Activated naive CD4-positive, alpha-beta T cell treated with anti-CD3 and anti-CD28 coated beads for 36 hours (primary cell): ENCODE measurements at regions of chr11 and their contacts with region 1.

Region 1: DNA sequence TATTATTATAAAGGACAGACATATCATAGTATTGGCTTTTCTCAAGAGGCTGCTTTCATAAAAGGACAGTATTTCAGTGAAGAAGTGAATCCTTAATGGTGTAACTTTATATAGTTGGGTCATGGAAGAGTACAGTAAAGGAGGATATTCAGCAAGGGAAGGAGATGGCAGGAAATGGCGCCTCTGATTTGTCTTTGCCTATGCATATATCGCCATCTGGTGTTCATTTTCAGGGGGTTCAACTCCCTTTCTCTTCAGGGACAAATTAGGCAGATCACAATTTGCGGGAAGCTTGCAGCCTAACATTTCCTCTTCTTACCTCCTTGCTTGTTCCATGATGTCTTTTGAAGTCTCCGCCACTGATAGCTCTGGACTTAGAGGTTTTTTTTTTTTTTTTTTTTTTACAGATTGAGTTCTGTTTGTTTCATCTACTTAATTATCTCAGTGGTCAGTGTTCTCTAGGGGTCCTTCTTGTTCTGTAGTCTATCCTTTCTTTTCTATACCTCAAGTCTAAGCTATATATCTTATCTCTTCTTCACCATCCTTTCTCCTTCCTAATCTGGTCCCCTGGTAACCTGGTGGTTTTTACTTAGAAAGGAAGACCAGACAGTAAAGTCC is 21.8 kb upstream of the RRM1 start:
- DNase-seq: peak; percentile 67
- H3K4me3 Mint-ChIP-seq: no peak overlapping the region
- H3K27ac Mint-ChIP-seq: peak overlapping the region; percentile 63
- H3K4me1 Mint-ChIP-seq: peaks cover 47% of the 10 kb centered on the region
- H3K27me3 Mint-ChIP-seq: no peaks in the 10 kb centered on the region

Region 2: GRCh38 chr11:3824714-3825472 is 247.9 kb before region 1 on chr11:
- CTCF ChIA-PET with region 1: interaction called, 19 read pairs
- intact Hi-C with region 1: loop called (anchors 1 kb)
- DNase-seq: peak; percentile 90
- H3K4me3 Mint-ChIP-seq: no peak overlapping the region
- H3K27ac Mint-ChIP-seq: peak overlapping the region; percentile 76
- H3K4me1 Mint-ChIP-seq: peaks cover 21% of the 10 kb centered on the region
- H3K27me3 Mint-ChIP-seq: no peaks in the 10 kb centered on the region

Region 3: DNA sequence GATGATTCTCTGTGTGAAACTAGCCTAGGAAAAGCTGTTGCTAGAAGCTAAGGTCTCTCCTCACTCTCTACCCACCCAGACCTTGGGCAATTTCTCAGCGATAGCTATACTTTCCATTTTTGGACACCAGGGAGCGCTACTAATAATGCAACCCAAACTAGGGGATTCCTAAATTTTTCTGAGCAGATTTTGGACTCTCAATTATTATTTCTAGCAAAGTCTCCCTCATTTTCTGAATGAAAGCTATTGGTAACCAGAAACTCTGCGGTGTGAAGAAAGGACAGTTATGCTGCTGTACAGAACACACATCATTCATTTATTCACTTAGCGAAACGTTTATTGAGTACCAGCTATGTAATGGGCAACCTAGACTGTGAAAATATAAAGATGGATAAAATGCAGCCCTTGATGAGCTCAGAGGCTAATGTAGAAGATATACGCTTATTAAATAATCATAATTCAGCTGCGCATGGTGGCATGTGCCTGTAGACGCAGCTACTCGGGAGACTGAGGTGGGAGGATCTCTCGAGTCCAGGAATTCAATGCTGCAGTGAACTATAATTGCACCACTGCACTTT is 223.4 kb before region 1 on chr11:
- CTCF ChIA-PET with region 1: interaction called, 573 read pairs
- intact Hi-C with region 1: loop called (anchors 1 kb)
- DNase-seq: peak; percentile 67
- H3K4me3 Mint-ChIP-seq: no peak overlapping the region
- H3K27ac Mint-ChIP-seq: no peak overlapping the region
- H3K4me1 Mint-ChIP-seq: peaks cover 45% of the 10 kb centered on the region
- H3K27me3 Mint-ChIP-seq: no peaks in the 10 kb centered on the region

Region 4: DNA sequence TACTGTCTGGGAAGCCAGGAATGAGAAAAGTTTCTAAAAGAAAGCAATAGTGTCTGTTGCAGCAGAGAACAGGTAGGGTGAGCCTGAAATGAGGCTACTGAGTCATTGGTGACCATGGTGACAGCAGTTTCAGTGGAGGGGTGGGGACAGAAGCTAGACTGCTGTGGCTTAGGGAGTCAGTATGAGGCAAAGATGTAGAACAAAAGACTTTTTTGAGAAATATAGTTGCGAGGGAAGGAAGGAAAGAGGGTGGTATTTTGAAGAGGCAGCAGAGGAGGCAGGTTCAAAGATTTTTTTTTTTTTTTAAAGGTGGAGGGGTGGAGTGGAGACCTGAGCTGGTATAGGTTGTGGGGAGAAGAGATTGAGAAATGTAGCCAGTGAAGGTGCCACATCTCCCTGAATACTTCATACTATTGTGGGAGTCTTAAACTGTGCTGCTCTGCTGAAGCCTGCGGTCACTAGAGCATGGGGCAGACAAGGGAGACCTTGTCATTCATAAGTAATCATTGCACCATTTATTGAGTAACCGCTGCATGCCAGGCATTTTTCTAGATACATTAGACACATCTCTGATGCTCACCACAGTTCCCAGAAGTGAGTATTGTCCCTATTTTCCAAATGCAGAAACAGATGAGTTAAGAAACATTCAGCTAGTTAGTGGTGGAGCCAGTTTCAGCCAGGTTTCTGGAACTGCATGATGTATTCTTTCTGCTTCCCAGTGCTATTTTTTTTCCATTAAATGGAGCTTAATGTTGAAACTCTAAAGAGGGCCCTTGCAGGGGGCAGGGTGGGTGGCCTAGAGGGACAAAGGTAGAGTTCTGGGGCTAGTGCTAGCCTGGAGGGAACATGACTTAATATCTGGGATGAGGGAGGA is 167.5 kb before region 1 on chr11:
- CTCF ChIA-PET with region 1: interaction called, 10 read pairs
- intact Hi-C with region 1: no loop called
- DNase-seq: peak; percentile 89
- H3K4me3 Mint-ChIP-seq: peak overlapping the region; percentile 5
- H3K27ac Mint-ChIP-seq: peak overlapping the region; percentile 66
- H3K4me1 Mint-ChIP-seq: peaks cover 80% of the 10 kb centered on the region
- H3K27me3 Mint-ChIP-seq: no peaks in the 10 kb centered on the region

Region 5: GRCh38 chr11:3971756-3972404 is 100.9 kb before region 1 on chr11:
- CTCF ChIA-PET with region 1: interaction called, 12 read pairs
- intact Hi-C with region 1: no loop called
- DNase-seq: no peak
- H3K4me3 Mint-ChIP-seq: no peak overlapping the region
- H3K27ac Mint-ChIP-seq: no peak overlapping the region
- H3K4me1 Mint-ChIP-seq: peaks cover 68% of the 10 kb centered on the region
- H3K27me3 Mint-ChIP-seq: no peaks in the 10 kb centered on the region

Region 6: GRCh38 chr11:4060182-4060923 is 12.4 kb before region 1 on chr11:
- CTCF ChIA-PET with region 1: interaction called, 25 read pairs
- intact Hi-C with region 1: no loop called
- DNase-seq: no peak
- H3K4me3 Mint-ChIP-seq: no peak overlapping the region
- H3K27ac Mint-ChIP-seq: no peak overlapping the region
- H3K4me1 Mint-ChIP-seq: peaks cover 42% of the 10 kb centered on the region
- H3K27me3 Mint-ChIP-seq: no peaks in the 10 kb centered on the region

Region 7: DNA sequence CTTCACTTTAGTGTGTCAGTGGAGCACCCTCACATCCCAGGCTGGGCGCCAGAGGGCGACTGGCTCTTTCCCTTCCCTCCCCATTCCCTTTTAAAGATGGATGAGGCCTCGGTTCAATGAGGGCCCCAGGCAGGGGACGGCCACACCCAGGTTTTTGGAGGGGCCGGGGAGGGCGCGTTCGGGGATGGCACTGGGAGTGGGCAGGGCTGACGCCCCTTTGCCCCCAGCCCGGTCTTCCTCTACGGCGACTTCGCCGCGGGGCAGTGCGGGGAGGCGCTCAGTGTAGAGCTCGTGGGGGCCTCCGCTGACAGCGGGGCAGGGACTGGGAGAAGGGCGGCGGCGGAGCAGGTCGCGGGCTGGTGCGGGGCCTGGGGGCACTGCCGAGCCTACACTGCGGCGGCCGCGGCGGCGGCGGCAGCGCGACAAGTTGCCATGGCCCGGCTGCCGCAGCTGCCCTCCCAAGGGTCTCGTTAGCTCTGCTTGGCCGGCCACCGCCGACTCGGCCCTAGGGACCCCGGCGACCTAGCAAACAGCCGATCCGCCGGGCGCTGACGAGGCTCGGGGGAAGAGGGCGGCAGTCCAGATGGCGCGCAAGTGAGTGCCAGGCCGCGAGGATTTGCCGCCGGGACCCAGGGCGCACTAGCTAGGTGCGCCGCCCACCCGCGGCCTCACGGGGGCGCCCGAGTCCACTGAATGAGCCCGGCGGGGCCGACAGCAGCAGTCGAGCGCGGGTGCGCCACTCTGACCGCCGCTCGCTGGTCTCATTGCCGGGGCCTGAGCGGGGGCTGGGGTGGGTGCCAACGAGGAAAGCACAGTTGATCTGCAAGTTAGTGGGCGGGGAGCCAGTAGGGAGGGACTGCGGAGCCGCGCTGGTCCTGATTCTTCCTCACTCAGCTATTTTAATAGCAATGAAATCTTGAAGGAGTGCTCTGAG is 114.5 kb after region 1 on chr11:
- CTCF ChIA-PET with region 1: no interaction called
- intact Hi-C with region 1: no loop called
- DNase-seq: peak; percentile 89
- H3K4me3 Mint-ChIP-seq: peak overlapping the region; percentile 73
- H3K27ac Mint-ChIP-seq: no peak overlapping the region
- H3K4me1 Mint-ChIP-seq: peaks cover 2% of the 10 kb centered on the region
- H3K27me3 Mint-ChIP-seq: peaks cover 9% of the 10 kb centered on the region